ENCODE measurements at regions of chr3 and their contacts with region 1.

Region 1: GRCh38 chr3:95939235-95939809 is 875.1 kb upstream of the EPHA6 start:
- H3K4me3 Mint-ChIP-seq: no peak overlapping the region
- H3K27ac Mint-ChIP-seq: no peak overlapping the region
- H3K4me1 Mint-ChIP-seq: no peaks in the 10 kb centered on the region
- H3K27me3 Mint-ChIP-seq: no peaks in the 10 kb centered on the region

Region 2: GRCh38 chr3:95899494-95899893 is 39.8 kb before region 1 on chr3:
- intact Hi-C with region 1: loop called (anchors 5 kb)
- H3K4me3 Mint-ChIP-seq: no peak overlapping the region
- H3K27ac Mint-ChIP-seq: no peak overlapping the region
- H3K4me1 Mint-ChIP-seq: no peaks in the 10 kb centered on the region
- H3K27me3 Mint-ChIP-seq: no peaks in the 10 kb centered on the region

Region 3: DNA sequence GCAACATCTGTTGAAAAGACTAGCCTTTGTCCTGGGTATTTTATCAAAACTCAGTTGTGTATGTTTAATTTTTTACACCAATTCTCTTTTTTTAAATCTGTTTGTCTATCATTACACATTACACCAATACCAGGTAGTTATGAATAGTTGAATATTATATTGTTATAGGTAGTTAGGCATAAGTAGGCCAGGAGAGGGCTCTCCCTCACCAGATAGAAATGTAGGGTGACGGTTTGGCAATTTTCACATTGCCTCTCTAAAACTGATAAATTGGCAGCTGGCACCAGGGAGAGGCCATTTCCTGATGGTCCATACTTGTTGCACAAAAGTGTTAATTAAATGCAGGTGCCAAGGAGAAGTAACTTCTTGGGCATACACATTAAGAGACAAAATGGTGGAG is 392.0 kb after region 1 on chr3:
- intact Hi-C with region 1: no loop called
- H3K4me3 Mint-ChIP-seq: no peak overlapping the region
- H3K27ac Mint-ChIP-seq: no peak overlapping the region
- H3K4me1 Mint-ChIP-seq: no peaks in the 10 kb centered on the region
- H3K27me3 Mint-ChIP-seq: no peaks in the 10 kb centered on the region